ENCODE measurements at regions of chr7 and their contacts with region 1.

Region 1: GRCh38 chr7:82572195-82572880 is 128.8 kb upstream of the CACNA2D1 start:
- DNase-seq: peak; percentile 93

Region 2: DNA sequence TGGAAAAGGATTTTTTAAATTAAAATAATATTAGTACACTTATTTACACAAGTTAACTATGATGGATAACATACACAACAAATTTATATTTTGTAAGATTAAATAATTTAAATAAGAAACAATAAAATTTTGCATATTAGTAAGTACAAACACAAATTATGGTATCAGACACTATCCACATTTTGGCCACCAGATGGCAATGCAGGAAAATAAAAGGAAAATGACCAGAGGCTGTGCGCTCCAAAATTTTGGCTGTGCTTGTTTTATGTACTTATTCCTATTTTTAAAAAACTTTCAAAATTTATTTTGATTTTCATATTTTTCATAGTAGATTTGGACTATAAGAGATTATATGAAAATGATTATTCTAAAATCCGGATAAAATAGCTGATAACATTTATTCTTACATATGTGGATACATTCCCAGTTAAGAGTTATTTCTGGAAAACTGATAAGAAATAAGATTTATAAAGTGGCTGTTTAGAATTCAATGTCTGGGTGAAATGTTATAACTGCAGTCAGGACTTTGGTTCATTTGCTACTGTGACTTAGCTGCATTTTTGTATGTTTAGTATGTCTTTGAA is 527.7 kb before region 1 on chr7:
- intact Hi-C with region 1: loop called in 1 of 2 experiments (anchors 10 kb)
- DNase-seq: no peak

Region 3: GRCh38 chr7:82234457-82235049 is 337.8 kb before region 1 on chr7:
- intact Hi-C with region 1: loop called in 1 of 2 experiments (anchors 10 kb)
- DNase-seq: no peak

Region 4: GRCh38 chr7:82319674-82320118 is 252.6 kb before region 1 on chr7:
- intact Hi-C with region 1: no loop called
- DNase-seq: peak; percentile 92